ENCODE measurements at regions of chr6 and their contacts with region 1.

Region 1: DNA sequence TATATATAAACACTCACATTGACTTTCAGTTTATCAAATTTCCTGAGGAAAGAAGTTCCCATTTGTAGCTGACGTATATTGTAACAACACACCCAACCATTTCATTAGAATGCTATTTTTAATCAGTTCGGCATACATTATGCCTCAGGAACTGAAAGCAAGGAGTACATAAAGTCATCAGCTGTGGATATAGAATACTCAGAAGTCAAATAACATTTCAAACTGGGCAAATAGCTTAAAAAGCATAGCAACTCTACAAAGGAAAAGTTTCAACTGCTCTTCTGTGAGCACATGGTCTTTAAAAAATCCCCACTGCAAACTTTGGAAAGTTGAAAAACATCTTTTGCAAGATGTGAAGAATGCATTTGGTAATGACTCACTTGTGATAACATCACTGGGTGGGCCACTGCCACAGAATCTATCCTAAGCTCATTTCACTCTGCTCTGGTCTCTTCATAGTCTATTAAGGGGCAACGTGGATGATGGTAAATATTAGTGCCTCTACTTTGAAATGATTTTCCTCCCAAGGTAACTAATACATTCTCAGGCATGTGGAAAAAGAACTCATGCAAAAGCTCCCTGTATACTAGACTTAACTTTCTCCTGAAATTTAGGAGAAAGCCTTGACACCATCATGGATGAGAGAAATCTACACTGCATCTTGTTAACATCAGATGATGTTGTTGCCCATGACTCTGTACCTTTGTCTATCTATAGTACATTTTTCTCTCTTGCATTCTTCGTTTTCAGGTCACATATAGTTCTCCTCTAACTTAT is 49.2 kb downstream of the FYN start:
- DNase-seq: no peak
- ATAC-seq: peak; percentile 73
- H3K4me3 ChIP-seq: peak overlapping the region; percentile 45
- H3K27ac ChIP-seq: peak overlapping the region; percentile 57
- H3K4me1 ChIP-seq: peaks cover 32% of the 10 kb centered on the region
- H3K27me3 ChIP-seq: no peaks in the 10 kb centered on the region
- CTCF ChIP-seq: no peak
- EP300 ChIP-seq: no peak
- POLR2A ChIP-seq: no peak
- RAD21 ChIP-seq: no peak

Region 2: GRCh38 chr6:111793711-111794111 is 30.3 kb before region 1 on chr6:
- CTCF ChIA-PET with region 1: interaction called, 10 read pairs
- POLR2A ChIA-PET with region 1: interaction called, 6 read pairs
- RAD21 ChIA-PET with region 1: interaction called, 6 read pairs
- SMC1A ChIA-PET with region 1: interaction called, 12 read pairs
- in situ Hi-C with region 1: no loop called
- intact Hi-C with region 1: no loop called
- DNase-seq: no peak
- ATAC-seq: peak; percentile 82
- H3K4me3 ChIP-seq: peak overlapping the region; percentile 66
- H3K27ac ChIP-seq: peak overlapping the region; percentile 85
- H3K4me1 ChIP-seq: peaks cover 36% of the 10 kb centered on the region
- H3K27me3 ChIP-seq: no peaks in the 10 kb centered on the region
- CTCF ChIP-seq: no peak
- EP300 ChIP-seq: no peak
- POLR2A ChIP-seq: peak; percentile 56
- RAD21 ChIP-seq: no peak

Region 3: DNA sequence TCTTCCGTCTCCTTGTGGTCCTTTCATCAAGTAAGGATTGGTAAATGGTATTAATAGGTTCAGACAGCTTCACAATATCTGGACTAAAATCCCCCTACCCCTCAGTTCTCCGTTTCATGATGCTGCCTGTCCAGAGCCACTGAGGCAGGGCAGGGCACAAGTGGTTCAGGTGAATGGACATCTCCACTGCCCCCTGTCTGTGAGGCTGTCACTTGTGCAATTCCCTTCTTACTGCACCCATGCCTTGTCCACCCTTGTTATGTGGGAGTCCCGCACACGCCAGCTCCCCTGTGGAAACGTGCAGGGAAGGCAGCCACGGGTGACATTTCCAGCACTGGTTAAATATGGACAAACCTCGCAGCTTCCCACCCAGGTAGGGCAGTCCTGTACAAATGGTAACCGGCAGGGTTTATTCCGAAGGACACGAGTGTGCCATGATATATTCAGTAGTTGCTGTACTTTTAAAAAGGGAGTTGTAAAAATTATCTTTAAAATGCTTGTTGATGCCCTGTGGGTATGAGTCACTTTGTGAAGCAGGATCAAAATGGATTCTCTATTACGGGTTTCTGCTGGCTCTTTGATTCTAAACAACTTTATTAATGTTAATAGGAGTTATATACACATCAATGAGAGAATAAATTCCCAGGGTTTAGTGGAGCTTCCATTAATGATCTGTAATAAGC is 24.3 kb before region 1 on chr6:
- CTCF ChIA-PET with region 1: interaction called, 10 read pairs
- POLR2A ChIA-PET with region 1: interaction called, 6 read pairs
- RAD21 ChIA-PET with region 1: interaction called, 13 read pairs
- SMC1A ChIA-PET with region 1: interaction called, 71 read pairs
- in situ Hi-C with region 1: no loop called
- intact Hi-C with region 1: no loop called
- DNase-seq: no peak
- ATAC-seq: no peak
- H3K4me3 ChIP-seq: no peak overlapping the region
- H3K27ac ChIP-seq: no peak overlapping the region
- H3K4me1 ChIP-seq: peaks cover 46% of the 10 kb centered on the region
- H3K27me3 ChIP-seq: no peaks in the 10 kb centered on the region
- CTCF ChIP-seq: peak in 2 of 3 experiments; percentile 12 to 22; a peak in 1 of 6 replicates
- EP300 ChIP-seq: no peak
- POLR2A ChIP-seq: no peak
- RAD21 ChIP-seq: no peak

Region 4: GRCh38 chr6:111813237-111813636 is 10.8 kb before region 1 on chr6:
- CTCF ChIA-PET with region 1: interaction called, 9 read pairs
- POLR2A ChIA-PET with region 1: interaction called, 4 read pairs
- RAD21 ChIA-PET with region 1: interaction called, 4 read pairs
- SMC1A ChIA-PET with region 1: interaction called, 21 read pairs
- in situ Hi-C with region 1: no loop called
- intact Hi-C with region 1: no loop called
- DNase-seq: no peak
- ATAC-seq: no peak
- H3K4me3 ChIP-seq: no peak overlapping the region
- H3K27ac ChIP-seq: no peak overlapping the region
- H3K4me1 ChIP-seq: peaks cover 4% of the 10 kb centered on the region
- H3K27me3 ChIP-seq: no peaks in the 10 kb centered on the region
- CTCF ChIP-seq: no peak
- EP300 ChIP-seq: no peak
- POLR2A ChIP-seq: no peak
- RAD21 ChIP-seq: no peak

Region 5: DNA sequence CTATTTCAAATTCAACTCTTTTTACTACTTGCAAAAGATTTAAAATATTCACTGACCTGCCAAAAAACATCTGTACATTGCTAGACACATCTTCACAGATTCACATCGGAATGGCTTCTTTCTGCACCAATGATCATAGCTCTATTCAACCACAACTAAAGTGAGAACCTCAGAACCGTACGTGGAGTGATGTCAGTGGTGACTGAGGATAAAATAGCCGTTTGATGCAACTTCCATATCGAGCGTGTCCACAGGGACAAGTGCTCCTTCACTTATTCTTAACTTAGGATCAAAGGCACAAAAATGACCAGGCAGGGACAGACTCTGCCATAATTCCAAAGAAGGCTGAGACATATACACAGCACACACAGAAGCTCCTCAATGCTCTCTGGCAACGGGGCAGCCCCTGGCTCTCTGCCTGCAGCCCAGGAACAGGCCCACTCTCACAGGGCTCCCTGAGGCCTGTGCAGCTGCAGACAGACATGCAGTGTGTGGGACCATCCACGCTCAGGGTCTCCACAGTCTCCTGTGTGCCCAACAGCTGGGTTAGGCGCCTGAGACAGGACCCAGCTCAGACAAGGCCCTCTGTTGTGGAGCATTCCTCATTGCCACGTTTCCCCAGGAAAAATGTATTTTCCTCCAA is 26.4 kb after region 1 on chr6:
- CTCF ChIA-PET with region 1: interaction called, 11 read pairs
- POLR2A ChIA-PET with region 1: interaction called, 6 read pairs
- RAD21 ChIA-PET with region 1: interaction called, 44 read pairs
- SMC1A ChIA-PET with region 1: interaction called, 92 read pairs
- in situ Hi-C with region 1: no loop called
- intact Hi-C with region 1: no loop called
- DNase-seq: no peak
- ATAC-seq: peak; percentile 73
- H3K4me3 ChIP-seq: no peak overlapping the region
- H3K27ac ChIP-seq: peak overlapping the region; percentile 60; the same call in 1 of the 2 replicates
- H3K4me1 ChIP-seq: peaks cover 40% of the 10 kb centered on the region
- H3K27me3 ChIP-seq: no peaks in the 10 kb centered on the region
- CTCF ChIP-seq: no peak
- EP300 ChIP-seq: 0 out of 4 replicates have a peak, but pooled peaks of 1 of the 2 experiments have one; percentile 23
- POLR2A ChIP-seq: no peak
- RAD21 ChIP-seq: no peak

Region 6: GRCh38 chr6:111861431-111861885 is 37.4 kb after region 1 on chr6:
- CTCF ChIA-PET with region 1: no interaction called
- POLR2A ChIA-PET with region 1: no interaction called
- RAD21 ChIA-PET with region 1: interaction called, 5 read pairs
- SMC1A ChIA-PET with region 1: interaction called, 30 read pairs
- in situ Hi-C with region 1: no loop called
- intact Hi-C with region 1: no loop called
- DNase-seq: no peak
- ATAC-seq: no peak
- H3K4me3 ChIP-seq: no peak overlapping the region
- H3K27ac ChIP-seq: no peak overlapping the region
- H3K4me1 ChIP-seq: peaks cover 21% of the 10 kb centered on the region
- H3K27me3 ChIP-seq: no peaks in the 10 kb centered on the region
- CTCF ChIP-seq: no peak
- EP300 ChIP-seq: no peak
- POLR2A ChIP-seq: no peak
- RAD21 ChIP-seq: no peak

Region 7: DNA sequence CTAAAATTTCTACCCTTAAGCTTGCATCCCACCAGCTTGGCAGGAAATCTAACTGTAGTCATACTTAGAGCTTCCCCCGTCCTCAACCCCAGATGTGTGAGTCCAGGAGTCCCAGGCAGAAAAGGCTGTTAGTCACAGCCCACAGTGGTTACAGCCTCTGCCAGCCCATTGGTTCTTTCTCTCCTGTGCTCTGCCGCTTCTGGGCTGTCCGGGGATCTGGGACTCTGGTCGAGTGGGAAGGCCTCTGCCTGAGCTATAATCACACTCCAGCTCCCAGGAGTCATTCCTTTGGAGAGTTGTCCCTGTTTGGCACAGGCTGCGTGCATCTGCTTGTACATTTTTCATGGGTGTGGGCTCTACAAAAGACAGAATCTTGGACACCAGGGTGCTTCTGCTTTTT is 94.8 kb after region 1 on chr6:
- CTCF ChIA-PET with region 1: no interaction called
- POLR2A ChIA-PET with region 1: no interaction called
- RAD21 ChIA-PET with region 1: no interaction called
- SMC1A ChIA-PET with region 1: no interaction called
- in situ Hi-C with region 1: no loop called
- intact Hi-C with region 1: no loop called
- DNase-seq: no peak
- ATAC-seq: no peak
- H3K4me3 ChIP-seq: no peak overlapping the region
- H3K27ac ChIP-seq: no peak overlapping the region
- H3K4me1 ChIP-seq: no peaks in the 10 kb centered on the region
- H3K27me3 ChIP-seq: no peaks in the 10 kb centered on the region; a peak in 1 of 4 replicates
- CTCF ChIP-seq: no peak
- EP300 ChIP-seq: no peak
- POLR2A ChIP-seq: no peak
- RAD21 ChIP-seq: no peak

Region 8: GRCh38 chr6:111950661-111951496 is 126.9 kb after region 1 on chr6:
- CTCF ChIA-PET with region 1: no interaction called
- POLR2A ChIA-PET with region 1: no interaction called
- RAD21 ChIA-PET with region 1: no interaction called
- SMC1A ChIA-PET with region 1: no interaction called
- in situ Hi-C with region 1: no loop called
- intact Hi-C with region 1: no loop called
- DNase-seq: no peak
- ATAC-seq: no peak
- H3K4me3 ChIP-seq: no peak overlapping the region
- H3K27ac ChIP-seq: no peak overlapping the region
- H3K4me1 ChIP-seq: 0 out of 2 replicates have a peak, but pooled peaks cover 4% of the 10 kb centered on the region
- H3K27me3 ChIP-seq: no peaks in the 10 kb centered on the region
- CTCF ChIP-seq: no peak
- EP300 ChIP-seq: no peak
- POLR2A ChIP-seq: no peak
- RAD21 ChIP-seq: no peak

Measured in GM12878 (cell line).